ENCODE measurements at regions of chr19 and their contacts with region 1.

Region 1: DNA sequence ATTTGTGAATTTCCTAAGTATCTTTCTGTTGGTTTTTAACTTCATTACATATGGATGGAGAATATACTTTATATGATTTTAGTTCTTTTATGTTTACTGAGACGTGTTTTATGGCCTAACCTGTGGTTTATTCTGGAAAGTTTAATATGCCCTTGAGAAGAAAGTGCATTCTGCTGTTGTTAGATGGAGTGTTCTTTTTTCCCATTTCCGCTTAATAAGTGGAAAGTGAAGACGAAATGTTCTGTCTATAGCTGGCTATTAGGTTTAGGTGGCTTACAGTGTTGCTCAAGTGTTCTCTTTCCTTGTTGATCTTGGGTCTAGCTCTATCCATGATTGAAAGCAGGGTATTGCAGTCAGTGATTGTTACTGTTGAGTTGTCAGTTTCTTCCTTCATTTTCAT is 17.2 kb upstream of the TIMM50 start:
- DNase-seq: no peak
- ATAC-seq: no peak
- H3K4me3 Mint-ChIP-seq: no peak overlapping the region
- H3K27ac Mint-ChIP-seq: peak overlapping the region; percentile 31
- H3K4me1 Mint-ChIP-seq: peaks cover 3% of the 10 kb centered on the region
- H3K27me3 Mint-ChIP-seq: no peaks in the 10 kb centered on the region
- CTCF ChIP-seq: no peak

Region 2: DNA sequence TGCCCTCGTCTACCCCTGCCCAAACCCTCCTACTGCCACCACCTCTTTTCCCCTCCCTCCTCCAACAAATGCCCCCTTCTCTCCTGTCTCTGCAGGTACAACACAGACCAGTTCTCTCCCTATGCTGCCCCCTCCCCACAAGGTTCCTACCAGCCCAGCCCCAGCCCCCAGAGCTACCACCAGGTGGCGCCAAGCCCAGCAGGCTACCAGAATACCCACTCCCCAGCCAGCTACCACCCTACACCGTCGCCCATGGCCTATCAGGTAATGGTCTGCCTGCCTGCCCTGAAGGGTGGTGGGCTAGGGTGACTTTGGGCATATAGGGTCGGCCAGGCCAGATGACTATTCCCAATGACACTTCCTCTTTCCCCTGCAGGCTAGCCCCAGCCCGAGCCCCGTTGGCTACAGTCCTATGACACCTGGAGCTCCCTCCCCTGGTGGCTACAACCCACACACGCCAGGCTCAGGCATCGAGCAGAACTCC is 10.8 kb after region 1 on chr19:
- CTCF ChIA-PET with region 1: interaction called, 13 read pairs
- POLR2A ChIA-PET with region 1: interaction called, 6 read pairs
- intact Hi-C with region 1: no loop called
- DNase-seq: peak; percentile 80
- ATAC-seq: peak; percentile 70
- H3K4me3 Mint-ChIP-seq: no peak overlapping the region
- H3K27ac Mint-ChIP-seq: no peak overlapping the region
- H3K4me1 Mint-ChIP-seq: peaks cover 32% of the 10 kb centered on the region
- H3K27me3 Mint-ChIP-seq: no peaks in the 10 kb centered on the region
- CTCF ChIP-seq: peak; percentile 76

Measured in activated CD8-positive, alpha-beta T cell treated with anti-CD3 and anti-CD28 coated beads for 36 hours (primary cell).